ENCODE measurements at regions of chr12 and their contacts with region 1.

Region 1: DNA sequence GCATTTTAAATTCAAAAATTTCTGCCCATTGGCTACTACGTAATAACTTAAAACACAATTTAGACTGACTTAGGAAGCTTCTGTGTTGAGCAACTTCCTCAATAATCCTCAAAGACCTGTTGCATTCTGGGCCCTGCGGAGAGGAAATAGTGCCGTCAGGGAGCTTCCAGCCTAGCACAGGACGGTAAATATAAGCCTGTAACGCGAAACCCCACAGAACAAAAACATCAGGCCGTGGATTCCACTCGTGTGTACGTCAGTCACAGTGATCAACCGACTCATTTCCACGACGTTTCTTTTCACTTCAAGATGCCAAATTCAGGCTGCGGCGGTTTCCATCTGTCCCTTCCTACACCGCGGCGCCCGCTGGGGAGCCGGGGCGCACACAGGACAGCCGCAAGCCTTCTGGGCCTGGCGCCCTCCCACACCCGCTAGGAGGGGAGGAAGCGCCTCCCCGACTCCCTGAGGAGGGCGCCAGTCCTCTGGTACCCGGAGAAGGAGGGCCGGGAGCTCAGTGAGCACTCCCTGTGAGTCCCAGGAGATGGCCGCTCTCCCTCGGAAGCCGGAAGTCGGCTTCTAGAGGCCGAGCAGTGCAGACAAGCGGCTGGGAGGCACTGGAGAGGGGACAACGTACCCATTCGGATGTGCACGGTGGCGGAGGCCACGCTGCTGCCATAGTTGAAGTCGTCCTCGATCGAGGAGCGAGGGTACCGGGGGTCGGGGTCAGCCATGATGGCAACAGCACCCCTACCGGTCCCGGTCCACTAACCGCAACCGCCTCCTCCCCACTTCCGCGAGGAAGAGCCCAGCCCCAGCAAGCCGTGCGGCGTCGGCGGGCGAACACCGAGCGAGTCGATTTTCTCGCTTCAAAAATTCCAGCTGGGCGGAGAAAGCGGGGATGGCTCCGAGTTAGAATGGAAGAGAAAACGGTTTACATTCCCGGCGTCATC is at the start of gene TMBIM4:
- DNase-seq: peak; percentile 93
- H3K4me3 Mint-ChIP-seq: peak within 1 kb of the TSS; percentile 98
- H3K27ac Mint-ChIP-seq: peak within 1 kb of the TSS; percentile 100
- H3K4me1 Mint-ChIP-seq: peaks cover 42% of the 10 kb centered on the region
- H3K27me3 Mint-ChIP-seq: no peaks in the 10 kb centered on the region
- total RNA-seq, gene TMBIM4: 51.2 to 51.3 TPM

Region 2: DNA sequence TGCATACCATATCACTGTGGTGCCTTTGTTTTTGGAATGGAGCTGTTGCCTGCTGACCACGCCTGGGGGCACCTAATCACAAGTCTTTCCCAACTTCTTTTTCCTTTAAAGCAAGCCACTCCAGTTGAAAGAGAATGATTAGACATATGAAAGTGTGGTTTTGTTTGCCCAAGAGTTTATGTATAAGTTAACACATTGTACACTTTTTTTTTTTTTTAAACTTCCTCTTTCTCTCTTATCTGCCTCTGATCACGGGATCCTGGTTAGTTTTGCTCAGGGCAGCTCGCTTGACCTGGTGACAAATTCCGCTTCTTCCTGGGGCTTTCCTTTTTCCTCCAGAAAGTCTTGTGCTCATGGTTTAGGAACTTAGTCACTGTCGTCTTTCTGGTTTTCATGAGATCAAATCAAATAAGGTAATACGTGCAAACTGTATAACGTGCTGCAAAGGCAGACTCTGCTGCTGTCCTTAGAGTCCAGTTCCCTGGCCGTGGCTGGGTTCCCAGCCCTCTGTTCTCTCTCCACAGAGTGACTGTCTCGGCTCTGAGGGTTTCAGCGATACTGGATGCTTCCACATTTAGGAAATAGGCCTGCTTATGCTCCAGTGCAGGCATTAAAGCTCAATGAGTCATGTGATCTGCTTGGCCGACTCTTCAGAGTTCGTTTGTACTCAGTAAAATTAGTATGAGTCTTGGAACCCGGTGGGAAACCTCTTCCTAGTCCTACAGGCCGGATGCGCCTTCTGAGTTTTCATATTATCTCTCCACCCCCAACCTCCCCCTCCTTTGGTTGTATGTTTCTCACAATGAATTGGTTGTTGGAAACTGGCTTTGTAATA is 1544.0 kb before region 1 on chr12:
- CTCF ChIA-PET with region 1: no interaction called
- intact Hi-C with region 1: loop called (anchors 5 kb)
- DNase-seq: peak; percentile 62
- H3K4me3 Mint-ChIP-seq: peak overlapping the region; percentile 57
- H3K27ac Mint-ChIP-seq: peak overlapping the region; percentile 86
- H3K4me1 Mint-ChIP-seq: peaks cover 69% of the 10 kb centered on the region
- H3K27me3 Mint-ChIP-seq: no peaks in the 10 kb centered on the region

Region 3: GRCh38 chr12:66144791-66145754 is 24.4 kb before region 1 on chr12:
- CTCF ChIA-PET with region 1: interaction called, 6 read pairs
- intact Hi-C with region 1: loop called (anchors 1 kb)
- DNase-seq: peak; percentile 49
- H3K4me3 Mint-ChIP-seq: no peak overlapping the region
- H3K27ac Mint-ChIP-seq: peak overlapping the region; percentile 86
- H3K4me1 Mint-ChIP-seq: peaks cover 16% of the 10 kb centered on the region
- H3K27me3 Mint-ChIP-seq: no peaks in the 10 kb centered on the region

Region 4: GRCh38 chr12:66196806-66197205 is 27.3 kb after region 1 on chr12:
- CTCF ChIA-PET with region 1: no interaction called
- intact Hi-C with region 1: loop called (anchors 1 kb)
- DNase-seq: peak; percentile 17
- H3K4me3 Mint-ChIP-seq: no peak overlapping the region
- H3K27ac Mint-ChIP-seq: peak overlapping the region; percentile 33
- H3K4me1 Mint-ChIP-seq: peaks cover 10% of the 10 kb centered on the region
- H3K27me3 Mint-ChIP-seq: peaks cover 22% of the 10 kb centered on the region

Region 5: GRCh38 chr12:66235626-66236281 is 66.3 kb after region 1 on chr12:
- CTCF ChIA-PET with region 1: interaction called, 13 read pairs
- intact Hi-C with region 1: loop called (anchors 1 kb)
- DNase-seq: no peak
- H3K4me3 Mint-ChIP-seq: peak overlapping the region; percentile 55
- H3K27ac Mint-ChIP-seq: no peak overlapping the region
- H3K4me1 Mint-ChIP-seq: peaks cover 4% of the 10 kb centered on the region
- H3K27me3 Mint-ChIP-seq: peaks cover 35% of the 10 kb centered on the region